ENCODE measurements at regions of chr2 and their contacts with region 1.

Region 1: DNA sequence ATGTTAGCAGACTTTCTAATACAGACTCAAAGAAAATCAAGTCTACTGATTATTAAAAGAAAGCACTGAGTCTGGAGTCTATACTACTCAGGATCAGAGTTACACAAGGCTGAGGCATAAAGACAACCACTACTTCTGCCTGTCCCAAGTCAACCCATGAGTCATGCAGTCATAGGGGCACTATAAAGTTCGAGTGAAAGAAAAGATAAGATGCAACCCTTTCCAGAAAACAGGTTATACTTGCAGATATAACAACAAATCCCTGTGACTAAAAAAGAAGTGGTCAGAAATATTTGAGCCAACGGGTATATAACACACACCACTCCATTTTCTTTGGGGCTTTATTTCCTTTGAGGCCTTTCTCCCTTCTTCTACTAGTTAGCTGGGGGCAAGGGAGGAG is 18.6 kb upstream of the SCRN3 start:
- DNase-seq: no peak
- H3K4me3 ChIP-seq: no peak overlapping the region
- H3K4me3 Mint-ChIP-seq: no peak overlapping the region
- H3K27ac Mint-ChIP-seq: no peak overlapping the region
- H3K4me1 ChIP-seq: no peaks in the 10 kb centered on the region
- H3K4me1 Mint-ChIP-seq: no peaks in the 10 kb centered on the region
- H3K27me3 ChIP-seq: no peaks in the 10 kb centered on the region
- H3K27me3 Mint-ChIP-seq: no peaks in the 10 kb centered on the region
- CTCF ChIP-seq: no peak

Region 2: DNA sequence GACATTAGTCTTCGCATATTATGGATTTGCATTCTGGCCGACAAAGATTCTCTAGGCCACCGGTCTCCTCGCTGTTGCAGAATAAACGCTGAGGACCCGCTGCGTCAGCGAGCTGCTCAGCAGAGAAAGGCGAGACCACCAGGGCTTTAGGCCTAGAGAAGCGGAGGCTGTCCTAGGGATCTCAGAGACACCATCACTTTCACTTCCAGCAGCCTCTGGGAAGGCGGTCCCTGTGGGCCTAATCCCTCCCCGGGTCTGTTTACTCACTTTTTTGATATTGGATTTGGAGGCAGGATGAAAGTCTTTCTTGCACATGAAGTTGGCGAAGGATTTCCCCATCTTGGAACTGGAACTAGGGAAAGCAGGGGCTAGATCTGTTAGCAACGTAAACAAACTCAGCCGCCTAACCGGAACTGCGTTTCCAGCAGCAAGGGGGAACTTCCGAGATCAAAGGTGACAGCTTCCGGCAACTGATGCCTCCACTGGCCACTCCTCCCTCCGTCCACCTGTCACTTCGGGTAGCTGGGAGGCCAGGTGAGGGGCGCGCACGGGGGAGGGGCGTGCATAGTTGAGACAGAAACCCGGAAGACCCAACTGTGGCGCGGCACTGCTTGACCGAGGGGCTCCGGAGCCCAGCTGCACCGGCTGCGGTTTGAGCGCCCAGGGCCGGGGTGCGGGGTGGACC is 18.5 kb after region 1 on chr2 and contains the start of gene SCRN3:
- CTCF ChIA-PET with region 1: interaction called, 10 read pairs
- POLR2A ChIA-PET with region 1: interaction called, 7 read pairs
- intact Hi-C with region 1: no loop called
- DNase-seq: peak; percentile 97 to 98
- H3K4me3 ChIP-seq: peak within 1 kb of the TSS; percentile 58
- H3K4me3 Mint-ChIP-seq: peak within 1 kb of the TSS; percentile 96
- H3K27ac Mint-ChIP-seq: peak within 1 kb of the TSS; percentile 97
- H3K4me1 ChIP-seq: no peaks in the 10 kb centered on the region
- H3K4me1 Mint-ChIP-seq: no peaks in the 10 kb centered on the region
- H3K27me3 ChIP-seq: no peaks in the 10 kb centered on the region
- H3K27me3 Mint-ChIP-seq: no peaks in the 10 kb centered on the region
- CTCF ChIP-seq: no peak
- total RNA-seq, gene SCRN3: 23.6 and 26.4 TPM in 2 replicates

Region 3: GRCh38 chr2:174412256-174412655 is 35.3 kb after region 1 on chr2:
- CTCF ChIA-PET with region 1: no interaction called
- POLR2A ChIA-PET with region 1: no interaction called
- intact Hi-C with region 1: no loop called
- DNase-seq: no peak
- H3K4me3 ChIP-seq: no peak overlapping the region
- H3K4me3 Mint-ChIP-seq: no peak overlapping the region
- H3K27ac Mint-ChIP-seq: no peak overlapping the region
- H3K4me1 ChIP-seq: 0 out of 2 replicates have a peak, but pooled peaks cover 4% of the 10 kb centered on the region
- H3K4me1 Mint-ChIP-seq: no peaks in the 10 kb centered on the region
- H3K27me3 ChIP-seq: no peaks in the 10 kb centered on the region
- H3K27me3 Mint-ChIP-seq: no peaks in the 10 kb centered on the region
- CTCF ChIP-seq: no peak

Region 4: GRCh38 chr2:174667379-174667781 is 290.4 kb after region 1 on chr2:
- CTCF ChIA-PET with region 1: no interaction called
- POLR2A ChIA-PET with region 1: no interaction called
- intact Hi-C with region 1: no loop called
- DNase-seq: no peak
- H3K4me3 ChIP-seq: no peak overlapping the region
- H3K4me3 Mint-ChIP-seq: no peak overlapping the region
- H3K27ac Mint-ChIP-seq: no peak overlapping the region
- H3K4me1 ChIP-seq: no peaks in the 10 kb centered on the region
- H3K4me1 Mint-ChIP-seq: no peaks in the 10 kb centered on the region
- H3K27me3 ChIP-seq: no peaks in the 10 kb centered on the region
- H3K27me3 Mint-ChIP-seq: no peaks in the 10 kb centered on the region
- CTCF ChIP-seq: no peak

Region 5: DNA sequence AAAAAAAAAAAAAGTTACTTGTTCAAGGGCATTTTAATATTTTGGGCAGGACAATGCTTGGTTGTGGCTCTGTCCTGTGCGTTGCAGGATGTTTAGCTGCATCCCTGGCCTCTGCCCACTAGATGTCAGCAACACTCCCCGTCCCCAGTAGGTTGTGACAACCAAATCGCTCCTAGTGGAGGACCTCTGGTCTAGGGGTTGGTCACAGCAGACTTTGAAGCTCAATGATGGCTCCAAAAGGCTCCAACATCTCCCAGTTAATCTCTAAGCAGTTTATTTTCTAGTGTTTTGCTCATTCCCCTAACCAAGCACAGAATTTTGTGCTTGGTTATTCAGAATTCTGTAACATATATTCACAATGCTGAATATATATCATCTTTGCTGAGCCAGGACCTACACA is 320.3 kb after region 1 on chr2:
- CTCF ChIA-PET with region 1: no interaction called
- POLR2A ChIA-PET with region 1: no interaction called
- intact Hi-C with region 1: no loop called
- DNase-seq: peak; percentile 71 to 77
- H3K4me3 ChIP-seq: no peak overlapping the region
- H3K4me3 Mint-ChIP-seq: no peak overlapping the region
- H3K27ac Mint-ChIP-seq: no peak overlapping the region
- H3K4me1 ChIP-seq: peaks cover 6% of the 10 kb centered on the region; the same call in 1 of the 2 replicates
- H3K4me1 Mint-ChIP-seq: peaks cover 6% of the 10 kb centered on the region
- H3K27me3 ChIP-seq: no peaks in the 10 kb centered on the region
- H3K27me3 Mint-ChIP-seq: no peaks in the 10 kb centered on the region
- CTCF ChIP-seq: peak; percentile 71 to 93